ENCODE measurements at regions of chrX and their contacts with region 1.

Region 1: DNA sequence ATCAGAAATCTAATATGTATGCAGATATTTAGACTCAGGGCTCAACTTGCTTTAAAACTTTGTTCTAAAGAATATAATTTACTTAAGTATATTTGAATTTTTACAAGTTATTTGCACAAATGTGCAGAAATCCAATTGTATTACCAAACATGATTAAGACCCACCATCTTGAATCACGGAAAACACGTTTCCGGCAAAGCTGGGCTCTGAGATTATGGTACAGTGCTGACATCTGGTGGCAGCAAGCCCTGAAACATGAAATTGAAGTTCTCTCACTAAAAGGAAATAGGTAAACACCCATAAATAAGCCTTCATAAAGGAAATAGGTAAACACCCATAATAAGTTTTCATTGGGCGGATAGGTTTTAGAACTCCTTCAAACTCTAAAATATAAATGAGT is 98.3 kb upstream of the MAOA start:
- DNase-seq: peak; percentile 72
- H3K4me3 Mint-ChIP-seq: no peak overlapping the region
- H3K27ac Mint-ChIP-seq: no peak overlapping the region
- H3K4me1 Mint-ChIP-seq: no peaks in the 10 kb centered on the region
- H3K27me3 Mint-ChIP-seq: no peaks in the 10 kb centered on the region

Region 2: GRCh38 chrX:41561045-41561444 is 1996.7 kb before region 1 on chrX:
- CTCF ChIA-PET with region 1: no interaction called
- intact Hi-C with region 1: loop called (anchors 10 kb)
- DNase-seq: peak; percentile 56
- H3K4me3 Mint-ChIP-seq: no peak overlapping the region
- H3K27ac Mint-ChIP-seq: peak overlapping the region; percentile 41
- H3K4me1 Mint-ChIP-seq: peaks cover 28% of the 10 kb centered on the region
- H3K27me3 Mint-ChIP-seq: no peaks in the 10 kb centered on the region

Region 3: DNA sequence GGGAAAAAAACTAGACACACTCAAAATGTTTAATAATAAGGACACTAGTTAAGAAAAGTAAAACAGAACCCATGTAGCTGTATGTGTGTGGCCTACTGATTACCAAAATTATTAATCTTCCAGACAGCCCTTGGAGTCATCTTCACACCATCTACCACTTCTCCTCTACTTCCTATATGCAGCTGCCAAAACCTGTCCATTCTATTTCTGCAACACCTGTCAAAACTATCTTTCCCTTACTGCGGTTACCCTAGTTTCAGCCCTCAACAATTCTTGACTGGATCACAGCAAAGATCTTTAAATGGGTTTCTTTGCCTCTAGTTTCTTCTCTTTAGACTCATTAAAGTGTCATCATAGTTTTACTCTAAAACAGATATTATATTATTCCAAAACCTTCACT is 1761.2 kb before region 1 on chrX:
- CTCF ChIA-PET with region 1: interaction called, 3 read pairs
- intact Hi-C with region 1: loop called (anchors 2 kb)
- DNase-seq: no peak
- H3K4me3 Mint-ChIP-seq: no peak overlapping the region
- H3K27ac Mint-ChIP-seq: no peak overlapping the region
- H3K4me1 Mint-ChIP-seq: peaks cover 43% of the 10 kb centered on the region
- H3K27me3 Mint-ChIP-seq: no peaks in the 10 kb centered on the region

Region 4: GRCh38 chrX:43349363-43349762 is 208.4 kb before region 1 on chrX:
- CTCF ChIA-PET with region 1: interaction called, 17 read pairs
- intact Hi-C with region 1: loop called (anchors 1 kb)
- DNase-seq: peak; percentile 49
- H3K4me3 Mint-ChIP-seq: no peak overlapping the region
- H3K27ac Mint-ChIP-seq: no peak overlapping the region
- H3K4me1 Mint-ChIP-seq: peaks cover 15% of the 10 kb centered on the region
- H3K27me3 Mint-ChIP-seq: no peaks in the 10 kb centered on the region

Region 5: DNA sequence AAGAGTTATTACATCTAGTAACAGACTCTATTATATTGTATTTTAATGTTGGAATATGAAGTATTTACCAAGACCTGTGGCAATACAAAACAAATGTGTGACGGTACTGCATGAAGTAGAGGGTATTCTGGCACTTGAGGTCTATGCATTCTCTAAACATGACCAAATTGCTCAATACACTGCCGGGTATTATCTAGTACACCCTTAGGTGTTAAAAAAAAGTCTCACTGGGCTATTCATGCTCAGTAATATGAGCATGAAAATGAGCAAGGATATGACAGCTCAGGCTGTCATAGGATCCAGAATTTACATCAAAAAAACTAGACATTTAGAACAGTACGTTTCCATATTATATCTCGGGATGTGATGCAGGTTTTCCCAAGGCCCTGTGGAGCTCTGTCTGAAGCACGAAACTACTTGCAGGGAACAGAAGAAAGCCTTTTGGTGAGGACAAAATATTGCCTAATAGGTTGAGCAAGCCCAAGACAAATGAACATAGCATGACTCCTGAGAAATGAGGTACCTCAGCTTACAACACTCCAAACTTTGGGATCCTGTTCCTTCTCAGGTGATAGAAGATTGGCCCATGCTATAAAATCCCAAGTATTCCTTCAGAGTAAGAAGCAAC is 24.2 kb after region 1 on chrX:
- CTCF ChIA-PET with region 1: no interaction called
- intact Hi-C with region 1: no loop called
- DNase-seq: no peak
- H3K4me3 Mint-ChIP-seq: no peak overlapping the region
- H3K27ac Mint-ChIP-seq: no peak overlapping the region
- H3K4me1 Mint-ChIP-seq: no peaks in the 10 kb centered on the region
- H3K27me3 Mint-ChIP-seq: peaks cover 5% of the 10 kb centered on the region

Region 6: GRCh38 chrX:43939187-43939926 is 381.6 kb after region 1 on chrX:
- CTCF ChIA-PET with region 1: no interaction called
- intact Hi-C with region 1: no loop called
- DNase-seq: no peak
- H3K4me3 Mint-ChIP-seq: no peak overlapping the region
- H3K27ac Mint-ChIP-seq: no peak overlapping the region
- H3K4me1 Mint-ChIP-seq: no peaks in the 10 kb centered on the region
- H3K27me3 Mint-ChIP-seq: no peaks in the 10 kb centered on the region

Region 7: GRCh38 chrX:44244008-44244407 is 686.2 kb after region 1 on chrX:
- CTCF ChIA-PET with region 1: no interaction called
- intact Hi-C with region 1: loop called (anchors 5 kb)
- DNase-seq: no peak
- H3K4me3 Mint-ChIP-seq: no peak overlapping the region
- H3K27ac Mint-ChIP-seq: no peak overlapping the region
- H3K4me1 Mint-ChIP-seq: peaks cover 17% of the 10 kb centered on the region
- H3K27me3 Mint-ChIP-seq: no peaks in the 10 kb centered on the region

Measured in activated naive CD4-positive, alpha-beta T cell treated with anti-CD3 and anti-CD28 coated beads for 36 hours (primary cell).